ENCODE measurements at regions of chr15 and their contacts with region 1.

Region 1: GRCh38 chr15:76575274-76575673 is 238.7 kb downstream of the ISL2 start:
- DNase-seq: no peak
- ATAC-seq: peak; percentile 75
- H3K4me3 Mint-ChIP-seq: no peak overlapping the region
- H3K27ac Mint-ChIP-seq: no peak overlapping the region
- H3K4me1 Mint-ChIP-seq: peaks cover 25% of the 10 kb centered on the region
- H3K27me3 Mint-ChIP-seq: no peaks in the 10 kb centered on the region

Region 2: DNA sequence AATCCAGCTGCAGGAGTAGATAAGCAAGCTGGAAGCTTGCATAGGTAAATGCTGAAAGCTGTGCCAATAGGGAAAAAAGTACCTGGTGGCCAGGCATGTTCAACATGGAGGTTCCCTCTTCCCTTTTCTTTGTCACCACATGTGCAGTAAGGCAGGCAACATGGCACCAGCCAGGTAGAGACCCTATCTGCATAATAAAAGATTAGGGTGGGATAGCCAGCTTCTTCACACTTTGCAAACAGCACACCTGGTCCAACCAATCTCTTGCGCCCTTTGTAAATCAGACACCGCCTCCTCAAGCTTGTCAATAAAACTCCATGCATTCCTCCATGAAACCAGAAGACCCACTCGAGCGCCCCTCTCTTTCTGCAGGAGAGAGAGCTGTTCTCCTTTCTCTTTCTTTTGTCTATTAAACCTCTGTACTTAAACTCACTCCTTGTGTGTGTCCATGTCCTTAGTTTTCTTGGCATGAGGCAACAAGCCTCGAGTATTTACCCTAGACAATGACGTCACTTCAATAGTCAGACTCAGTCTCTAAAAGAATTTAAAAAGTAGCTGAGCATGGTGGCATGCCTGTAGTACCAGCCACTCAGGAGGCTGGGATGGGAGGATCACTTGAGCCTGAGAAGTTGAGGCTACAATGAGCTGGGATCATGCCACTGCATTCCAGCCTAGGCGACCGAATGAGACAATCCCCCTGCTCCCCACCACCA is 73.6 kb after region 1 on chr15:
- CTCF ChIA-PET with region 1: no interaction called
- POLR2A ChIA-PET with region 1: no interaction called
- intact Hi-C with region 1: loop called in 1 of 2 experiments (anchors 1 kb)
- DNase-seq: no peak
- ATAC-seq: no peak
- H3K4me3 Mint-ChIP-seq: no peak overlapping the region
- H3K27ac Mint-ChIP-seq: no peak overlapping the region
- H3K4me1 Mint-ChIP-seq: peaks cover 7% of the 10 kb centered on the region
- H3K27me3 Mint-ChIP-seq: no peaks in the 10 kb centered on the region

Region 3: DNA sequence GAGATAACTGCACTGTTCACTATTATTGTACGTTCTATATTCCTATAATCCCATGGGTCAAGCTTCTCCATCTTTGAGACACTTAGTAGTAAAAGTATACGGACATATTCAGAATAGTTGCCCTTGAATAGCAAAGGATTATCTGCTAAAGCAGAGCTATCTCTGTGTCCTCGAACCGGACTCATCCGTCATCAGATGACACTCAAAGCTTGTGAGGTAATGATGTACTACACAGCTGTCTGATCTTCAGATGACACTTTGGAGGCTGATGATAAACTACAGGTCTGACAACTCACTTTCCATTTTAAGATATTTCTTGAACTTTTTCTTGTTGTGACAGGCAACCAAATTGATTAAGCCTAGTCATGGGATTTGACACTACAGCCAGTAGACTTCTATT is 89.6 kb after region 1 on chr15:
- CTCF ChIA-PET with region 1: no interaction called
- POLR2A ChIA-PET with region 1: no interaction called
- intact Hi-C with region 1: no loop called
- DNase-seq: no peak
- ATAC-seq: no peak
- H3K4me3 Mint-ChIP-seq: no peak overlapping the region
- H3K27ac Mint-ChIP-seq: no peak overlapping the region
- H3K4me1 Mint-ChIP-seq: peaks cover 8% of the 10 kb centered on the region
- H3K27me3 Mint-ChIP-seq: no peaks in the 10 kb centered on the region

Region 4: GRCh38 chr15:77282333-77282732 is 707.1 kb after region 1 on chr15:
- CTCF ChIA-PET with region 1: no interaction called
- POLR2A ChIA-PET with region 1: no interaction called
- intact Hi-C with region 1: no loop called
- DNase-seq: no peak
- ATAC-seq: no peak
- H3K4me3 Mint-ChIP-seq: no peak overlapping the region
- H3K27ac Mint-ChIP-seq: no peak overlapping the region
- H3K4me1 Mint-ChIP-seq: no peaks in the 10 kb centered on the region
- H3K27me3 Mint-ChIP-seq: no peaks in the 10 kb centered on the region

Measured in activated CD4-positive, alpha-beta T cell treated with anti-CD3 and anti-CD28 coated beads for 36 hours (primary cell).